ENCODE measurements at regions of chr2 and their contacts with region 1.

Region 1: DNA sequence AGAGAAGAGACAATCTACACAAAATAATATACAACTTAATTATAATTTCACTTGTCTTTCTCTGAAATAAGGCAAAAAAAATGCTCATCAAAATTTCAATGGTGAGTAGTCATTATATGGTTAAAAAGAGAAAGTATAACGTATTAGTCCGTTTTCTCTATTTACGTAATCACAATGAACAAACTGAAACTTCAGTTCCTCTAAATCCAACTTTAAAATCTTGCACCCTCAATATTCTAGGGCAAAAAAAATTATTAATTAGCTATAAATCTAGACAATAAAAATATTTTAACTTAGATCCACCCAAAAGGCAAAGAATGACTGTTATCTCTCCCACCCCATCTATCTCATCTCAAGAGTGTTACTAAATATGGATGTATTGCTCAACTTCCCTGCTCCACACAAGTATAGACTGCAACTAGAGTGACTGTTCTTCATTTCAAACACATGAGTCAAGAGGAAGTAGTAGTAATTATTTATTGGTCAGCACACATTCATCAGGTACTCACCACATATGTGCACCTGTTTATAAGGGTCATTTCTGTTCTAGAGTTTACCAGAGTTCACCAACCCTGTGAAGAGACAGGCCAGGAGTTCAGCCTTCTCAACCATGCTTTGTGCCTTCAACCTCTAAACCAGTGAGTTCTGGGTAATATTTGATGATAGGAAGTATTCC is 36.4 kb downstream of the STK39 start:
- DNase-seq: no peak
- ATAC-seq: peak; percentile 62
- H3K4me3 Mint-ChIP-seq: peak overlapping the region; percentile 29
- H3K27ac Mint-ChIP-seq: peak overlapping the region; percentile 99
- H3K4me1 Mint-ChIP-seq: peaks cover 75% of the 10 kb centered on the region
- H3K27me3 Mint-ChIP-seq: no peaks in the 10 kb centered on the region

Region 2: DNA sequence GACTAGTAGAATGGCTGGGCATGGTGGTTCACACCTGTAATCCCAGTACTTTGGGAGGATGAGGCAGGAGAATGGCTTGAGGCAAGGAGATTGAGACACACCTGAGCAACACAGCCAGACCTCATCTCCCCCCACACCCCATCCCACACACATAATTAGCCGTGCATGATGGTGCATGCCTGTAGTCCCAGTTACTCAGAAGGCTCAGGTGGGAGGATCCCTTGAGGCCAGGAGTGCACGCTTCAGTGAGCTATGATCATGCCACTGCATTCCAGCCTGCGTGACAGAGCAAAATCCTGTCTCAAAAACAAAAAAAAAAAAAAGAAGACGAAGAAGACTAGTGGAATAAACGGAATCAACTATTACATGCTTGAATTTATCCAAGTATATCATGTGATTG is 113.6 kb before region 1 on chr2:
- CTCF ChIA-PET with region 1: no interaction called
- POLR2A ChIA-PET with region 1: no interaction called
- intact Hi-C with region 1: no loop called
- DNase-seq: no peak
- ATAC-seq: no peak
- H3K4me3 Mint-ChIP-seq: no peak overlapping the region
- H3K27ac Mint-ChIP-seq: no peak overlapping the region
- H3K4me1 Mint-ChIP-seq: no peaks in the 10 kb centered on the region
- H3K27me3 Mint-ChIP-seq: no peaks in the 10 kb centered on the region

Region 3: GRCh38 chr2:168166902-168167510 is 44.0 kb before region 1 on chr2:
- CTCF ChIA-PET with region 1: interaction called, 4 read pairs
- POLR2A ChIA-PET with region 1: no interaction called
- intact Hi-C with region 1: loop called (anchors 1 kb)
- DNase-seq: peak; percentile 52
- ATAC-seq: peak; percentile 82
- H3K4me3 Mint-ChIP-seq: no peak overlapping the region
- H3K27ac Mint-ChIP-seq: peak overlapping the region; percentile 74
- H3K4me1 Mint-ChIP-seq: peaks cover 58% of the 10 kb centered on the region
- H3K27me3 Mint-ChIP-seq: no peaks in the 10 kb centered on the region

Region 4: DNA sequence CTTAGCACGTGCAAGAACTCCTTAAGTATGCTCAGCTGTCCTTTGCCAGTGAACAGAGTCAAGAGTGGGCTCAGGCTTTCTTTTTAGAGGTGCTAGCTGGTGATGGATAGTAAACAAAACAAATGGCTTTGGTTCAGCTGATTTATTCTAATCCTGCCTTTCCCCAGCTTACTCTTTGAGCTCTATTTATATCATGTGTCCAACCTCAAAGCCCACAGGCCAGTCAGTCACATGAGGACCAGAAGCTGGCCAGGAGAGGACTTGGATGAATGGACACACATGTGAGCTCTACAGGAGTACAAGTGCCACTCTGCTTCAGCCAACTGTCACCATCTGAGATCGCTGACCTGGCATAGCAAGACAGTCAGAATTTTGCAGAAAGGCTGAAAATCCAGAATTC is 23.0 kb before region 1 on chr2:
- CTCF ChIA-PET with region 1: no interaction called
- POLR2A ChIA-PET with region 1: no interaction called
- intact Hi-C with region 1: no loop called
- DNase-seq: no peak
- ATAC-seq: no peak
- H3K4me3 Mint-ChIP-seq: no peak overlapping the region
- H3K27ac Mint-ChIP-seq: no peak overlapping the region
- H3K4me1 Mint-ChIP-seq: peaks cover 62% of the 10 kb centered on the region
- H3K27me3 Mint-ChIP-seq: no peaks in the 10 kb centered on the region

Region 5: GRCh38 chr2:168224346-168224745 is 13.3 kb after region 1 on chr2:
- CTCF ChIA-PET with region 1: interaction called, 3 read pairs
- POLR2A ChIA-PET with region 1: interaction called, 3 read pairs
- intact Hi-C with region 1: loop called (anchors 1 kb)
- DNase-seq: no peak
- ATAC-seq: peak; percentile 91
- H3K4me3 Mint-ChIP-seq: no peak overlapping the region
- H3K27ac Mint-ChIP-seq: no peak overlapping the region
- H3K4me1 Mint-ChIP-seq: peaks cover 41% of the 10 kb centered on the region
- H3K27me3 Mint-ChIP-seq: no peaks in the 10 kb centered on the region

Region 6: DNA sequence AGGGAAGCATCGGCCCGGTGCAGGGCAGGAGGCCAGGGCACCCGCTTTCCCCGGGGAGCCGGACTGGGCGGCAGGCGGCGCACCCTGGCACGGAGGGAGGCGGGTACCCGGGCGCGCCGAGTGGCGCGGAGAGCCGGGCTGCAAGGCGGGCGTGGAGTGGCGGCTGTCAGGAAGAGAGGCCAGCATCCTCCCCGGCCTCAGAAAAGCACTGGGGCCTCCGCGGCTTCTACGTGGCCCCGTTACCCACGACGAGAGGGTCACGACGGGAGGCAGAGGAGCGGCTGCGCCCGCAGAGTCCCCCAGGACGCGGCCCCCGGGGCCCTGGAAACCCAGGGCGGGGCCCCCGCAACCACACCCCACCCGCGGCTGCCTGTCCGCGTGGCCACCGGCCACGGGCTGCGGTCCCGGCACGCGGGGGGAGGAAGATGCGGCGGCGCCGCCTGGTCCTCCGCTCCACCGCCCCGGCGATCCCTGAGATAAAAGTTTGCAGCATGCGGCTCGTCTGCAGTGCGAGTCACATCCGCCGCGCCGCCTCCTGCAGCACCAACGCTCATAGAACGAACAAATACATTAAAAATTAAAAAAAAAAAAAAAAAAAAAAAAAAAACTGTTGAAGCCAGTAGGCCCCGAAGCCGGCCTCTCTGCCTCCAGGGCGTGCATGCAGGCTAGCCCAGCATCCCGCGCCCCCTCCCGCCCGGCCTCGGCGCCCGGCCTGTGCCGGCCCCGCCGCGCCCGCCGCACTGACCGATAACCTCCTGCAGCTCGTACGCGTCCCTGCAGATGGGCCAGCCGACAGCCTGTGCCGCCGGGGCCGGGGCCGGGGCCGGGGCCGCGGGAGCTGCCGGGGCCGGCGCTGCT is 35.7 kb after region 1 on chr2:
- CTCF ChIA-PET with region 1: interaction called, 3 read pairs
- POLR2A ChIA-PET with region 1: interaction called, 3 read pairs
- intact Hi-C with region 1: loop called (anchors 1 kb)
- DNase-seq: peak; percentile 85
- ATAC-seq: peak; percentile 47
- H3K4me3 Mint-ChIP-seq: peak overlapping the region; percentile 94
- H3K27ac Mint-ChIP-seq: peak overlapping the region; percentile 96
- H3K4me1 Mint-ChIP-seq: peaks cover 28% of the 10 kb centered on the region
- H3K27me3 Mint-ChIP-seq: no peaks in the 10 kb centered on the region

Region 7: DNA sequence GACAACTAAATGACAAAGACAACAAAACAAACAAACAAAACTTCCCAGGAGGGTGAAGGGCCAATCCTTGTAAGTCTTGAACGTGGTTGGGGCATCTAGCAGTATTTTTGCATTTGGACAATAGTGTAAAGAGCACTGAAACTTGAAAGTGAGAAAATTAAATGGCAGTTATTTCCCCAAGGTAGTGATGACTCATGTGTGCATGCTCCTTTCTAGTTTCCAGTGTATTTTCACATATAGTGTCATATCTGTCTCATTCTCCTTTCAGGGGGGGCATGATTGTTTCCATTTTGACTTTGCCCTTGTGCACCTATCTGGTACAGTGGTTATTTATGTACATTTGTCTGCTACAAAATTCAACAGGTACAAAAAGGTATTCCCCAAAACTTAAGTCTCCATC is 284.5 kb after region 1 on chr2:
- CTCF ChIA-PET with region 1: interaction called, 6 read pairs
- POLR2A ChIA-PET with region 1: interaction called, 6 read pairs
- intact Hi-C with region 1: loop called (anchors 1 kb)
- DNase-seq: peak; percentile 18
- ATAC-seq: peak; percentile 80
- H3K4me3 Mint-ChIP-seq: no peak overlapping the region
- H3K27ac Mint-ChIP-seq: no peak overlapping the region
- H3K4me1 Mint-ChIP-seq: peaks cover 53% of the 10 kb centered on the region
- H3K27me3 Mint-ChIP-seq: peaks cover 4% of the 10 kb centered on the region

Region 8: GRCh38 chr2:168552450-168552856 is 341.4 kb after region 1 on chr2:
- CTCF ChIA-PET with region 1: no interaction called
- POLR2A ChIA-PET with region 1: no interaction called
- intact Hi-C with region 1: no loop called
- DNase-seq: no peak
- ATAC-seq: no peak
- H3K4me3 Mint-ChIP-seq: no peak overlapping the region
- H3K27ac Mint-ChIP-seq: no peak overlapping the region
- H3K4me1 Mint-ChIP-seq: peaks cover 25% of the 10 kb centered on the region
- H3K27me3 Mint-ChIP-seq: no peaks in the 10 kb centered on the region

Region 9: GRCh38 chr2:168920504-168921157 is 709.6 kb after region 1 on chr2:
- CTCF ChIA-PET with region 1: no interaction called
- POLR2A ChIA-PET with region 1: no interaction called
- intact Hi-C with region 1: loop called in 1 of 2 experiments (anchors 1 kb)
- DNase-seq: no peak
- ATAC-seq: no peak
- H3K4me3 Mint-ChIP-seq: no peak overlapping the region
- H3K27ac Mint-ChIP-seq: no peak overlapping the region
- H3K4me1 Mint-ChIP-seq: peaks cover 6% of the 10 kb centered on the region
- H3K27me3 Mint-ChIP-seq: peaks cover 17% of the 10 kb centered on the region